Activated CD4-positive, alpha-beta memory T cell treated with anti-CD3 and anti-CD28 coated beads for 36 hours (primary cell): ENCODE measurements at regions of chr16 and their contacts with region 1.

Region 1: GRCh38 chr16:4425378-4426020 is at the start of gene DNAJA3:
- DNase-seq: peak; percentile 94
- H3K4me3 Mint-ChIP-seq: peak within 1 kb of the TSS; percentile 94
- H3K27ac Mint-ChIP-seq: peak within 1 kb of the TSS; percentile 100
- H3K4me1 Mint-ChIP-seq: peaks cover 27% of the 10 kb centered on the region
- H3K27me3 Mint-ChIP-seq: no peaks in the 10 kb centered on the region
- total RNA-seq, gene DNAJA3: 74.6 to 75.0 TPM

Region 2: GRCh38 chr16:4192206-4192605 is 233.3 kb before region 1 on chr16:
- CTCF ChIA-PET with region 1: no interaction called
- POLR2A ChIA-PET with region 1: no interaction called
- intact Hi-C with region 1: no loop called
- DNase-seq: no peak
- H3K4me3 Mint-ChIP-seq: no peak overlapping the region
- H3K27ac Mint-ChIP-seq: no peak overlapping the region
- H3K4me1 Mint-ChIP-seq: no peaks in the 10 kb centered on the region
- H3K27me3 Mint-ChIP-seq: no peaks in the 10 kb centered on the region

Region 3: DNA sequence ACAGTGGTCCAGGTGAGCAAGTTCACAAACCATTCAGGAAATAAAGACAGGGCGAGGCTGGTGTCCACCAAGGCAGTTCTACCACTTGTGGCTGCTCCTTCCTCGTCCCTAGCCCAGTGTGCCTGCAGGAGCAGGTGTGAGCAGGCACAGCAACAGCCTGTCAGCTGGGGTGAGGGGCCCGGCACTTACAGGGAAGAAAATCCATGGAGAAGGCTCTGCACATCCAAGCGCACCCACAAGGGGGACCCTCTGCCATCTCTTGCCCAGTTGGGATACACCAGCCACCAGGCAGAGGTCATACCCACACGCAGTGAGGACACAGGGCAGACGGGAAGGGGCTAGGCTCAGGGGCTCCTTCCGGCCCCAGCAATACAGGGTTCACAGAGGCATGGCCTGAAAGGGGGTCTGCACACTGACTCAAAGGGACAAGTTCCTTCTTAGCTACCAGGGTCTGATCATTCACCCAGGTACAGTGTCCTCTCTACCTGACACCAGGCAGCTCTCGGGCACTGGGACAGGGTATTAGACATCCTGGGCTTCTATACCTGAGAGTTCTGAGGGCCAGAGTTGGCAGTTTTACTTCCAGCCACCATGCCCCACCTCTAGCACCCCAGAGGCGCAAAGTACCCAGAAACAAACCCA is 86.1 kb after region 1 on chr16:
- CTCF ChIA-PET with region 1: no interaction called
- POLR2A ChIA-PET with region 1: no interaction called
- intact Hi-C with region 1: no loop called
- DNase-seq: peak; percentile 38
- H3K4me3 Mint-ChIP-seq: no peak overlapping the region
- H3K27ac Mint-ChIP-seq: no peak overlapping the region
- H3K4me1 Mint-ChIP-seq: peaks cover 36% of the 10 kb centered on the region
- H3K27me3 Mint-ChIP-seq: no peaks in the 10 kb centered on the region

Region 4: GRCh38 chr16:4538350-4539235 is 113.1 kb after region 1 on chr16 and contains the start of gene CDIP1:
- CTCF ChIA-PET with region 1: no interaction called
- POLR2A ChIA-PET with region 1: no interaction called
- intact Hi-C with region 1: loop called (anchors 1 kb)
- DNase-seq: peak; percentile 99
- H3K4me3 Mint-ChIP-seq: peak within 1 kb of the TSS; percentile 72
- H3K27ac Mint-ChIP-seq: peak within 1 kb of the TSS; percentile 12
- H3K4me1 Mint-ChIP-seq: peaks cover 33% of the 10 kb centered on the region
- H3K27me3 Mint-ChIP-seq: no peaks in the 10 kb centered on the region
- total RNA-seq, gene CDIP1: 25.7 to 27.5 TPM

Region 5: GRCh38 chr16:4616047-4616811 is 190.7 kb after region 1 on chr16:
- CTCF ChIA-PET with region 1: no interaction called
- POLR2A ChIA-PET with region 1: no interaction called
- intact Hi-C with region 1: loop called (anchors 1 kb)
- DNase-seq: peak; percentile 100
- H3K4me3 Mint-ChIP-seq: peak overlapping the region; percentile 88
- H3K27ac Mint-ChIP-seq: peak overlapping the region; percentile 95
- H3K4me1 Mint-ChIP-seq: peaks cover 23% of the 10 kb centered on the region
- H3K27me3 Mint-ChIP-seq: no peaks in the 10 kb centered on the region